ENCODE measurements at regions of chr6 and their contacts with region 1.

Region 1: DNA sequence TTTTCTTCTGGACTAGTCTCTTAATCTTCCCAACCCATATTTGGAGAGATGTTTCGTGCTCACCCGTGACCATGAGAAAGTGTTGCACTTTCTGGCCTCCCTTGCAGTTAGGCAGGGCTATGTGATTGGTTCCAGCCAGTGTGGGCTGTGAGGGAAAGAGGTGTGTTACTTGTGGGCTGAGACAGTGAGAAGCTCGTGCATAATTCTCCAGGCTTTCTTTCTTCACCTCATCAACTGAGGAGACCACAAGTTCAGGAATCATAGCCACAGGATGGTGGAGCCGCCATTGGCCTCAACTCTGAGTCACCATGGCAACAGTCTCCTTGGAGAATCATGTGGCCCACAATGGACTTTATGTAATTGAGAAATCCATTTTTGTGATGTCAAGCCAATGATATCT is 57.5 kb upstream of the FUCA2 start:
- DNase-seq: peak in 1 of 5 donors; percentile 16
- ATAC-seq: peak in 1 of 4 donors; percentile 32
- H3K4me3 ChIP-seq: no peak overlapping the region
- H3K27ac ChIP-seq: peak overlapping the region in 2 of 12 donors; percentile 13 to 34
- H3K4me1 ChIP-seq: peaks cover 0 to 7% (median 0%) of the 10 kb centered on the region in 12 donors
- H3K27me3 ChIP-seq: no peaks in the 10 kb centered on the region
- CTCF ChIP-seq: no peak
- POLR2A ChIP-seq: no peak

Region 2: GRCh38 chr6:143510991-143511891 is 57.8 kb before region 1 on chr6 and contains the start of gene FUCA2:
- intact Hi-C with region 1: loop called in 3 of 10 experiments (anchors 2 to 5 kb)
- DNase-seq: peak; percentile 94 to 96 (median 95)
- ATAC-seq: peak; percentile 82 to 93 (median 90)
- H3K4me3 ChIP-seq: peak within 1 kb of the TSS; percentile 47 to 92 (median 74)
- H3K27ac ChIP-seq: peak within 1 kb of the TSS; percentile 26 to 97 (median 90)
- H3K4me1 ChIP-seq: peaks cover 0 to 48% (median 31%) of the 10 kb centered on the region in 12 donors
- H3K27me3 ChIP-seq: no peaks in the 10 kb centered on the region
- CTCF ChIP-seq: peak in 1 of 12 donors; percentile 13
- POLR2A ChIP-seq: peak in 1 of 2 donors; percentile 65
- total RNA-seq, gene FUCA2: 18.0 to 68.6 (median 34.8) TPM

Measured in heart left ventricle (tissue), 16 donors.